Activated CD4-positive, alpha-beta T cell treated with anti-CD3 and anti-CD28 coated beads for 36 hours (primary cell): ENCODE measurements at regions of chr15 and their contacts with region 1.

Region 1: GRCh38 chr15:89171136-89172072 is 50.0 kb downstream of the RLBP1 start:
- DNase-seq: peak; percentile 65
- ATAC-seq: no peak
- H3K4me3 Mint-ChIP-seq: no peak overlapping the region
- H3K27ac Mint-ChIP-seq: no peak overlapping the region
- H3K4me1 Mint-ChIP-seq: peaks cover 30% of the 10 kb centered on the region
- H3K27me3 Mint-ChIP-seq: no peaks in the 10 kb centered on the region

Region 2: DNA sequence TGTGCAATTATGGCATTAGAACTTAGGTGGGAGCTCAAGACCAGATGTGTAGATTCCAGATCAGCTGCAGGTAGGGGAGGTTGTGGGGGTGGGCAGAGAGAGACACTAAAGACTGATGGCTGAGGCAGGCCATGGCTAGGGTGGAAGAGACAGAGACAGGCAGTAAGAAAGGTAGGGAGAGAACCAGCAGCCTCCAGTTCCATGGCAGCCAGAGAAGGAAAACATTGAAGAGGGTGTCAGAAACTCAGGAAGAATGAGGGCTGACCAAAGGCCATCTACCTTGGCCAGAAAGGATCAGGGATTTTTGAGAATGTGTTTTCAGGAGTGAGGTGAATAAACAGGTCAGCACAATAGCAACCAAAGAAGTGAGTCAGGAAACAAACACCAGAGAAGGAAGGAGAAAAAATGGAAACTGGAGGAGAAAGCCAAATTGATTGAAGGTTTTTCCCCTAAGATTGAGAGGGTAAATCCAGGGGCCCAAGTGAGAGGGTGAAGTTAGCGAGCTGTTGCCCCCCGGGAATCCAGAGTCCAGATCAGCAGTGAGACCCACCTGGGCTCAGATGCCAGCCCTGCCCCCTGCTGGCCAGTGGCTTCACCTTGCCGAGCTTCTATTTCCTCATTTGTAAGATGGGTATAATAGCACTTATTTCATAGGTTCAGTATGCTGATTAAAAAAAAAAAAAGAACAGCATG is 42.1 kb before region 1 on chr15:
- CTCF ChIA-PET with region 1: interaction called, 22 read pairs
- POLR2A ChIA-PET with region 1: no interaction called
- intact Hi-C with region 1: loop called in 1 of 2 experiments (anchors 5 kb)
- DNase-seq: peak; percentile 75
- ATAC-seq: peak; percentile 25
- H3K4me3 Mint-ChIP-seq: no peak overlapping the region
- H3K27ac Mint-ChIP-seq: no peak overlapping the region
- H3K4me1 Mint-ChIP-seq: peaks cover 28% of the 10 kb centered on the region
- H3K27me3 Mint-ChIP-seq: no peaks in the 10 kb centered on the region

Region 3: DNA sequence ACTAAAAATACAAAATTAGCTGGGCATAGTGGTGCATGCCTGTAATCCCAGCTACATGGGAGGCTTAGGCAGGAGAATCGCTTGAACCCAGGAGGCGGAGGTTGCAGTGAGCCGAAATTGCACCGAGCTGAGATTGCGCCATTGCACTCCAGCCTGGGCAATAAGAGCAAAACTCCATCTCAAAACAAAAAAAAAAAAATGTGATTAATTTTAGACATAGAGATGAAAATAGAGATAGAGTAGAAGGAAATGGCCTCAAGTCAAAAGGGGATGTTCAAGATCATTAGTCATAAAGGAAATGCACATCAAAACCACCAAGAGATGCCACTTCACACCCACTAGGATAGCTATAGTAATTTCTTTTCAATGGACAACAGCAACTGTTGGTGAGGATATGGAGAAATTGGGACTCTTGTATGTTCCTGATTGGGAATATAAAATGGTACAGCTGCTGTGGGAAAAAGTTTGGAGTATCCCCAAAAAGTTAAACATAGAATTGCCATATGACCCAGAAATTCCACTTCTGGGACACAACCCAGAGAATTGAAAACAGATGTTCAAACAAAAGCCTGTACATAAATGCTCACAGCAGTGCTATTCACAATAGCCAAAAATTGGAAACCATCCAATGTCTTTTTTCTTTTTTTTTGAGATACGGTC is 27.8 kb before region 1 on chr15:
- CTCF ChIA-PET with region 1: interaction called, 11 read pairs
- POLR2A ChIA-PET with region 1: no interaction called
- intact Hi-C with region 1: loop called in 1 of 2 experiments (anchors 1 kb)
- DNase-seq: peak; percentile 20
- ATAC-seq: peak; percentile 95
- H3K4me3 Mint-ChIP-seq: no peak overlapping the region
- H3K27ac Mint-ChIP-seq: no peak overlapping the region
- H3K4me1 Mint-ChIP-seq: peaks cover 22% of the 10 kb centered on the region
- H3K27me3 Mint-ChIP-seq: no peaks in the 10 kb centered on the region

Region 4: DNA sequence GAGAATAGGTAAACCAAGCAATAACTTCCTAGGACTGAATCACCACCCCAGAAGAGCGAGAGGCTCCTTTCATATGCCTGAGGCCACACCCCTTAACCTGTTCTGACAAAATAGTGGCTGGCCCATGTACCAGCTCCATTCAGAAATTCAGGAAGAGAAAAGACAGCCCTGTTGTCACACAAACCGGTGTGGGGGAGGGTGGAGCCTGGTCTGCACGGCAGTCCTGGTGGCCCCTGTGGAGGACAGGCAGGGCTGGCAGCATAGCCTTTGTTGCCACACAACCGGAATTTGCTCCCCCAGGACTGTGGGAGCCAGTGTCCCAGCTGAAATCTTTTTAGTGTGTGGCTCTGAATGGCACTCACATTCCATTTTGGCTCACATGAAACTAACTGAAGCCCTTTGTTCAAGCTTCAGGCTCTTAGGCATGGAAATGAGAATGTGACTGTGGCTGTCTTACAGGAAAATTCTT is 26.1 kb after region 1 on chr15:
- CTCF ChIA-PET with region 1: interaction called, 5 read pairs
- POLR2A ChIA-PET with region 1: no interaction called
- intact Hi-C with region 1: loop called in 1 of 2 experiments (anchors 1 kb)
- DNase-seq: peak; percentile 62
- ATAC-seq: peak; percentile 90
- H3K4me3 Mint-ChIP-seq: peak overlapping the region; percentile 4
- H3K27ac Mint-ChIP-seq: peak overlapping the region; percentile 75
- H3K4me1 Mint-ChIP-seq: peaks cover 33% of the 10 kb centered on the region
- H3K27me3 Mint-ChIP-seq: no peaks in the 10 kb centered on the region

Region 5: GRCh38 chr15:89334510-89335288 is 163.3 kb after region 1 on chr15 and contains the start of gene POLG:
- CTCF ChIA-PET with region 1: interaction called, 4 read pairs
- POLR2A ChIA-PET with region 1: no interaction called
- intact Hi-C with region 1: loop called in 1 of 2 experiments (anchors 1 kb)
- DNase-seq: peak; percentile 99
- ATAC-seq: peak; percentile 92
- H3K4me3 Mint-ChIP-seq: peak within 1 kb of the TSS; percentile 80
- H3K27ac Mint-ChIP-seq: peak within 1 kb of the TSS; percentile 87
- H3K4me1 Mint-ChIP-seq: peaks cover 56% of the 10 kb centered on the region
- H3K27me3 Mint-ChIP-seq: peaks cover 2% of the 10 kb centered on the region
- total RNA-seq, gene POLG: 63.2 to 80.4 TPM